Activated CD4-positive, alpha-beta T cell treated with anti-CD3 and anti-CD28 coated beads for 36 hours (primary cell): ENCODE measurements at regions of chr1 and their contacts with region 1.

Region 1: DNA sequence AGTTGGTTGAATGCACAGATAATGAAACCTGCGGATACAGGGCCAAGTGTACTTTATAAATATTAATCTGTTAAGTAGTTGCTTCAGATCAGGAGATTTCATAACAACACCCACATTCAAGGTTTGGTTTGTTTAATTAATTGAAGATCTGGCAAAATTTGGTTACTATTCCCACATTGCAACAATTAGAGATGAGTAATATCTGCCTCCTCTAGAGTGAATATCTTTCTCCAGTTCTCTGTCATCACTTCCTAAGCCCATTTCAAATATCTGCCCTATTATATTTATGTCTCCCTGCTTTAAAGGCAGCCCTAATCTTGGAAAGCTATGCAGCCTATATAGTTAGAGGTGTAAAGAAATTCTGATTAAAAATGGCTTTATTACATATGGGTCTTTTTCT is 61.4 kb downstream of the PPP2R5A start:
- DNase-seq: no peak
- ATAC-seq: no peak
- H3K4me3 Mint-ChIP-seq: no peak overlapping the region
- H3K27ac Mint-ChIP-seq: peak overlapping the region; percentile 10
- H3K4me1 Mint-ChIP-seq: peaks cover 3% of the 10 kb centered on the region
- H3K27me3 Mint-ChIP-seq: no peaks in the 10 kb centered on the region

Region 2: DNA sequence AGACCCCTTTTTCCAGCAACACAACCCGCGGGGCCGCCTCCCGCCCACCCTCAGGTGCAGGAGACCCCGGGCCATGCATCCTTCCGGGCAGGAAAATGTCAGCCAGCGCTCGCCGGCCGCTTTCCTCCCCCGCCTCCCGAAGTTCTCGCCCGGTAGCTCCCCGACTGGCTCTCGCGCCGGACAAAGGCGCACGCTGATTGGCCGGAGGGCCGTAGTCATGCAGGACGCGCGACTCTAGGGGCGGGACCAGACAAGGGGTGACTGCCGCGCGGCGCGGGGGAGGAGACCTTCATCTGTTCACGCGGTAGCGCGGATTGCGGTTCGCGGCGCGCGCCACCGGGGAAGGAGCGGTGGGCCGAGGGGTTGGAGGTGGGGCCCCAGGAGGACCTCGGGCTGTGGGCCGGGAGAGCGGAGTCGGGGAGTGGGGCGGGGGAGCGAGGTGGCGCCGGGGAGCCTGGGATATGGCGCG is 511.4 kb after region 1 on chr1 and contains the start of gene FLVCR1:
- CTCF ChIA-PET with region 1: no interaction called
- POLR2A ChIA-PET with region 1: no interaction called
- intact Hi-C with region 1: no loop called
- DNase-seq: peak; percentile 98
- ATAC-seq: peak; percentile 98
- H3K4me3 Mint-ChIP-seq: no peak within 1 kb of the TSS
- H3K27ac Mint-ChIP-seq: peak within 1 kb of the TSS; percentile 92
- H3K4me1 Mint-ChIP-seq: peaks cover 15% of the 10 kb centered on the region
- H3K27me3 Mint-ChIP-seq: no peaks in the 10 kb centered on the region
- total RNA-seq, gene FLVCR1: 13.5 to 13.9 TPM

Region 3: DNA sequence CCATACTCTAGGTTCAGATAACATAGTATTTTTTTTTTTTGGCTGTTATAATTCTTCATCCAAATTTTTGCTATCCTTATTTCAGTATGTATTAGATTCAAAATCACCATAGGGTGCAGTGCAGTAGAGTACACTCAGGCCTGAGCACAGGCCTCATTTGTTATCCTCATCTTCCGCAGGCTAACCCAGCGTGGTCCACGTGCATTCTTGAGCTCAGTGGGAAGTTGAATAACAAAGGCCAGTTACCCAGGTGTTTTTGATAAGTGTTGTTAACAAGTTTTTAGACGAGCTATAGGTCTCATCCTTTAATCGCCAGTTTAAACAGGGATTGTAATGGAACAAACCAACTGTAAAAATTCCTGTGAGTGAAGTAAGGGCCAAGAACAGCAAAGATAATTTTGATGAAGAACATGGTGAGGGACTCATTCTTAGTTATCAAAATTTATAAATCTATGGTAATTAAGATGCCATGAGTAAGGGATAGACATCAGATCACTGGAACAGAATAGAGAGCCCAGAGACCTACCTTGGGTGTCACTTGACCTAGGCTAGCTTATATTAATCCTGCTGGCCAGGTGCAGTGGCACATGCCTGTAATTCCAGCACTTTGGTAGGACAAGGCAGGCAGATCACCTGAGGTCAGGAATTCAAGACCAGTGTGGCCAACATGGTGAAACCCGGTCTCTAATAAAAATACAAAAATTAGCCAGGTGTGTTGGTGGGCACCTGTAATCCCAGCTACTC is 533.5 kb after region 1 on chr1:
- CTCF ChIA-PET with region 1: no interaction called
- POLR2A ChIA-PET with region 1: no interaction called
- intact Hi-C with region 1: no loop called
- DNase-seq: no peak
- ATAC-seq: no peak
- H3K4me3 Mint-ChIP-seq: no peak overlapping the region
- H3K27ac Mint-ChIP-seq: no peak overlapping the region
- H3K4me1 Mint-ChIP-seq: no peaks in the 10 kb centered on the region
- H3K27me3 Mint-ChIP-seq: no peaks in the 10 kb centered on the region

Region 4: GRCh38 chr1:212944229-212944901 is 597.8 kb after region 1 on chr1:
- CTCF ChIA-PET with region 1: no interaction called
- POLR2A ChIA-PET with region 1: no interaction called
- intact Hi-C with region 1: loop called in 1 of 2 experiments (anchors 5 kb)
- DNase-seq: no peak
- ATAC-seq: no peak
- H3K4me3 Mint-ChIP-seq: no peak overlapping the region
- H3K27ac Mint-ChIP-seq: no peak overlapping the region
- H3K4me1 Mint-ChIP-seq: no peaks in the 10 kb centered on the region
- H3K27me3 Mint-ChIP-seq: peaks cover 8% of the 10 kb centered on the region